SK-N-SH (cell line): ENCODE measurements at regions of chr10 and their contacts with region 1.

Region 1: GRCh38 chr10:73263948-73264347 is 11.5 kb upstream of the MRPS16 start:
- DNase-seq: peak; percentile 34
- H3K4me3 ChIP-seq: peak overlapping the region in 1 of 2 experiments; percentile 42; a peak in 1 of 4 replicates
- H3K27ac ChIP-seq: peak overlapping the region in 1 of 2 experiments; percentile 25; a peak in 1 of 4 replicates
- H3K4me1 ChIP-seq: peaks cover 0 to 15% of the 10 kb centered on the region in 2 experiments; a peak in 2 of 4 replicates
- H3K27me3 ChIP-seq: no peaks in the 10 kb centered on the region
- CTCF ChIP-seq: peak; percentile 78
- EP300 ChIP-seq: no peak
- RAD21 ChIP-seq: peak; percentile 67

Region 2: DNA sequence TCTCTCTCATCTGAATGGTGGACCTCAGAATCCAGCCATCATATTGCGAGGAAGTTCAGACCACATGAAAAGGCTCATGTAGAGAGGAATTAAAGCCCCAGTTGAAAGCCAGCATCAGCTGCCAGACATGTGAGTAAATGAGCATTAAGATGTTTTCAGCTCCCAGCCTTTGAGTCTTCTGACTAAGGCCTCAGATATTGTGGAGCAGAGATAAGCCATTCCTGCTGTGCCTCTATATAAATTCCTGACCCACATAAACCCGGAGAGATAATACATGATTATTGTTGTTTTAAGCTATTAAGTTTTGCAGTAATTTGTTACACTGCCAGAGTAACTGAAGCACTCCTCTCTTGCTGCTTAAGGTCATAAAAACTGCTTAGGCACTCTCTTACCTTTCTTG is 81.4 kb before region 1 on chr10:
- CTCF ChIA-PET with region 1: no interaction called
- POLR2A ChIA-PET with region 1: no interaction called
- DNase-seq: no peak
- H3K4me3 ChIP-seq: no peak overlapping the region
- H3K27ac ChIP-seq: no peak overlapping the region
- H3K4me1 ChIP-seq: no peaks in the 10 kb centered on the region
- H3K27me3 ChIP-seq: no peaks in the 10 kb centered on the region
- CTCF ChIP-seq: no peak
- EP300 ChIP-seq: no peak
- RAD21 ChIP-seq: no peak

Region 3: DNA sequence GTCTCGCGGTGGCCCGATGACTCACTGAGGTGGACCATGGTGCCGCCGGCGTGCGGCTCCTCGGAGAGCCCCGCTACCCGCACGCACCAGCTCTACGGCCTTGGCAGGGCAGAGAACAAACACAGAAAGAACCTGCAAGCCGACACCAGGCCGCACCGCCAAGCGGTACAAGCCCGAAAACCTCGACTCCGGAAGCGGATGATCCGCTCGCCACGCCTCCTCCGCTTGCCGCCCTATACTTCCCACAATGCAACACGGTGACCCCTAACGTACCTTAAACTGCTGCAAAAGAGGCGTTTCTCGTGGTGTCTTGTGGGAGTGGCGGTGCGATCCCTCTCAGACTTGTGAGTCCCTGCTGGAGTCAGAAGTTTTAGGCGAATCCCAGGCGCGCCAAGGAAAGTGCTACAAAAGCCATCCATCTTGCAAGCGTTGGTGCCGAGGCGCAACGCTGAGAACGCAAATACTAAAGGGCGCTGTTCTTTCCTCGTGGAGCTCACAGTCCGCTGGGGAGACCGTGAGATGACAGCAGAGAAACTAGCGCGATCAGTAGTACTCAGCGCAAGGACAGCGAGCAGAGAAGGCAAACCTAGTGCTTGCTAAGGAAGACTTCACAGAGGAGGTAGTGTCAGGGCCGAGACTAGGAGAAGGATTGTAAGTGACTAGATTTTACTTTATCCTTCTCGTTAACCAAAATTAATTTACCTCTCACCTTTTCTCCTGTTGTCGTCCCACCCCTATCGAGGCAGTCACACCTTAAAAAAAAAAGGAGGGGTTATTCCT is 11.3 kb before region 1 on chr10 and contains the start of gene MRPS16:
- CTCF ChIA-PET with region 1: interaction called, 17 read pairs
- POLR2A ChIA-PET with region 1: interaction called, 3 read pairs
- DNase-seq: peak; percentile 92
- H3K4me3 ChIP-seq: peak within 1 kb of the TSS; percentile 87 to 94
- H3K27ac ChIP-seq: peak within 1 kb of the TSS; percentile 90 to 93
- H3K4me1 ChIP-seq: peaks cover 14 to 21% of the 10 kb centered on the region in 2 experiments; a peak in 3 of 4 replicates
- H3K27me3 ChIP-seq: no peaks in the 10 kb centered on the region
- CTCF ChIP-seq: no peak
- EP300 ChIP-seq: no peak; a peak in 1 of 4 replicates
- RAD21 ChIP-seq: no peak
- polyA plus RNA-seq, gene MRPS16: 75.5 and 78.0 TPM in 2 replicates

Region 4: DNA sequence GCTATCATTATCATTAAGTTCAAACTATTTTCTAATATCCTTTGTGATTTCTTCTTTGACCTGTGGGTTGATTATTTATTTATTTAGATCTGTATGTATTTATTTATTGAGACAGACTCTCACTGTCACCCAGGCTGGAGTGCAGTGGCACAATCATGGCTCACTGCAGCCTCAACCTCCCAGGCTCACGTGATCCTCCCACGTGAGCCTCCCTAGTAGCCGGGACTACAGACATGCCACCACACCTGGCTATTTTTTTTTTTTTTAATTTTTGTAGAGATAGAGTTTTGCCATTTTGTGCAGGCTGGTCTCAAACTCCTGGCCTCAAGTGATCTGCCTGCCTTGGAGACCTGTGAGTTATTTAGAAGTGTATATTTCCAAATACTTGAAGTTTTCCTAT is 17.1 kb after region 1 on chr10:
- CTCF ChIA-PET with region 1: interaction called, 18 read pairs
- POLR2A ChIA-PET with region 1: no interaction called
- DNase-seq: no peak
- H3K4me3 ChIP-seq: no peak overlapping the region
- H3K27ac ChIP-seq: no peak overlapping the region
- H3K4me1 ChIP-seq: no peaks in the 10 kb centered on the region
- H3K27me3 ChIP-seq: no peaks in the 10 kb centered on the region
- CTCF ChIP-seq: no peak
- EP300 ChIP-seq: no peak
- RAD21 ChIP-seq: no peak

Region 5: DNA sequence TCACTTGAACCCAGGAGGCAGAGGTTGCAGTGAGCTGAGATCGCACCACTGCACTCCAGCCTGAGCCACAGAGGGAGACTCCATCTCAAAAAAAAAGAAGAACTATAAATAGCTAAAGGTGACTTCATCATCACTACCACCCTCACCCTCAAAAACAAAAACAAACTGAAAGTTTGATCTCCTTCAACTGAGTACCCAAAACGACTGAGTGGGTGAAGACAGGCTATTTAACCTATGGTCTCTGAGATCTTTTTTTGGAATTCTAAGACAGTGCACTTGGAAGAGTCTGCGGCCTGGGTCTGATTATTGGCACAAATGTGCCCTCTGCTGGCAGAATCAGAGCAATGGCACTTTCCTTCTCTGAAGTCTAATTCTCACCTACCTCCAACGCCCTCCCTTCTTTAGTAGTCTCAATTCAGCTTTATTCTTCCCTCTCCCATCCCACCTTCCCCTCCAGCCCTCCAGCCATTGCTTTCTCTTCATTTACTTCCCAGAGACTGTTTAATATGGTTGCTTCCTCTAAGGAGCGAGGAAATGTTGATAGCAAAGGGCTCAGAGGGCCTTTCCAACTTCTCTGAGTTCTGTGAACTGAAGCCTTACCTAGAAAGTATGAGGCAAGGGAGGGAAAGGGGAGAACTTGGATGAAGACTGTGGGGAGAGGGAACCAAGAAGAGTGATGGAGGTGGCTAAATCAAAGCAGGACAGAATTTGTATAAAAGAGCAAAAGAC is 380.2 kb after region 1 on chr10:
- CTCF ChIA-PET with region 1: interaction called, 11 read pairs
- POLR2A ChIA-PET with region 1: no interaction called
- DNase-seq: peak; percentile 72
- H3K4me3 ChIP-seq: no peak overlapping the region; a peak in 1 of 4 replicates
- H3K27ac ChIP-seq: no peak overlapping the region
- H3K4me1 ChIP-seq: peaks cover 0 to 16% of the 10 kb centered on the region in 2 experiments; a peak in 1 of 4 replicates
- H3K27me3 ChIP-seq: no peaks in the 10 kb centered on the region
- CTCF ChIP-seq: peak; percentile 85
- EP300 ChIP-seq: no peak
- RAD21 ChIP-seq: peak; percentile 95